Activated CD4-positive, alpha-beta memory T cell treated with anti-CD3 and anti-CD28 coated beads for 36 hours (primary cell): ENCODE measurements at regions of chr17 and their contacts with region 1.

Region 1: GRCh38 chr17:27236717-27237315 is 57.1 kb upstream of the WSB1 start:
- DNase-seq: peak; percentile 82
- H3K4me3 Mint-ChIP-seq: no peak overlapping the region
- H3K27ac Mint-ChIP-seq: no peak overlapping the region
- H3K4me1 Mint-ChIP-seq: peaks cover 15% of the 10 kb centered on the region
- H3K27me3 Mint-ChIP-seq: peaks cover 4% of the 10 kb centered on the region

Region 2: DNA sequence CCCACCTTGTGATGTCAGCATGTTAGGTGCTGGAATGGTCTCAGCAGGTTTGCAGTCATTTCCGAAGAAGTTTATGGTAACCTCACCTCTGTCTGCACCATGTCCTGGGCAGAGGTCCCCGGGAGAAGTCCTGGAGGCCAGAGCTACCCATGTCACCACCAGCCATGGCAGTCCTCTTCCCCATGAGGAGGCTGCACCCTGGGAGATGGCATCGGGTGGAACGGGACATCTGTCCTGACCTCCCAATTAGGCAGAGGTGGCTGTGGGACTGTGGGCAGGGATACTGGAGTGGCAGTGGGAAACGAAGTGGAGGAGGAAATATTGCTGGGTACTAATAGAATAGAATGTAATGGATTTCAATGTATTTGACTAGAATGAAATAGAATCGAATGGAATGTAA is 454.7 kb before region 1 on chr17:
- CTCF ChIA-PET with region 1: no interaction called
- POLR2A ChIA-PET with region 1: no interaction called
- intact Hi-C with region 1: no loop called
- DNase-seq: no peak
- H3K4me3 Mint-ChIP-seq: no peak overlapping the region
- H3K27ac Mint-ChIP-seq: no peak overlapping the region
- H3K4me1 Mint-ChIP-seq: no peaks in the 10 kb centered on the region
- H3K27me3 Mint-ChIP-seq: no peaks in the 10 kb centered on the region

Region 3: DNA sequence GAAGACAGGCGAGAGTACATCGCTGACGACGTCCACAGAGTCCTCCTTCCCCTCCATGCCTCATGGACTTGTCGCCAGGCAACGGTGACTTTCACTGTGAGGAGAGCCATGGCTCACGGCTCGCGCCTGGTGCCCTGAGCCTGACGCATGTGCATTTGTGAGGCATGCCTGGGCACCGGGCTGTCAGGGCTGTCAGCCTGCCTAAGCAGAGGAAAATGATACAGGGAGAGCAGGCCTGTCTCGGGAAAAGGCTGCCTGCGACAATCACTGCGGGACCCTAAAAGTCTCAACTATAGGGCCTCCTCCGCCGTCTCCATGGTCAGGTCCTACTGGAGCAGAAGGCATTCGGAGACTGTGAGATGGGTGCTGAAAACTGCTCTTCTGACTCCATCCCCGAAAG is 78.4 kb before region 1 on chr17:
- CTCF ChIA-PET with region 1: no interaction called
- POLR2A ChIA-PET with region 1: no interaction called
- intact Hi-C with region 1: no loop called
- DNase-seq: no peak
- H3K4me3 Mint-ChIP-seq: no peak overlapping the region
- H3K27ac Mint-ChIP-seq: no peak overlapping the region
- H3K4me1 Mint-ChIP-seq: no peaks in the 10 kb centered on the region
- H3K27me3 Mint-ChIP-seq: no peaks in the 10 kb centered on the region

Region 4: GRCh38 chr17:27293898-27294688 is 57.3 kb after region 1 on chr17 and contains the start of gene WSB1:
- CTCF ChIA-PET with region 1: interaction called, 47 read pairs
- POLR2A ChIA-PET with region 1: interaction called, 12 read pairs
- intact Hi-C with region 1: loop called (anchors 1 kb)
- DNase-seq: peak; percentile 94
- H3K4me3 Mint-ChIP-seq: peak within 1 kb of the TSS; percentile 99
- H3K27ac Mint-ChIP-seq: peak within 1 kb of the TSS; percentile 100
- H3K4me1 Mint-ChIP-seq: peaks cover 39% of the 10 kb centered on the region
- H3K27me3 Mint-ChIP-seq: no peaks in the 10 kb centered on the region
- total RNA-seq, gene WSB1: 135 to 147 TPM

Region 5: DNA sequence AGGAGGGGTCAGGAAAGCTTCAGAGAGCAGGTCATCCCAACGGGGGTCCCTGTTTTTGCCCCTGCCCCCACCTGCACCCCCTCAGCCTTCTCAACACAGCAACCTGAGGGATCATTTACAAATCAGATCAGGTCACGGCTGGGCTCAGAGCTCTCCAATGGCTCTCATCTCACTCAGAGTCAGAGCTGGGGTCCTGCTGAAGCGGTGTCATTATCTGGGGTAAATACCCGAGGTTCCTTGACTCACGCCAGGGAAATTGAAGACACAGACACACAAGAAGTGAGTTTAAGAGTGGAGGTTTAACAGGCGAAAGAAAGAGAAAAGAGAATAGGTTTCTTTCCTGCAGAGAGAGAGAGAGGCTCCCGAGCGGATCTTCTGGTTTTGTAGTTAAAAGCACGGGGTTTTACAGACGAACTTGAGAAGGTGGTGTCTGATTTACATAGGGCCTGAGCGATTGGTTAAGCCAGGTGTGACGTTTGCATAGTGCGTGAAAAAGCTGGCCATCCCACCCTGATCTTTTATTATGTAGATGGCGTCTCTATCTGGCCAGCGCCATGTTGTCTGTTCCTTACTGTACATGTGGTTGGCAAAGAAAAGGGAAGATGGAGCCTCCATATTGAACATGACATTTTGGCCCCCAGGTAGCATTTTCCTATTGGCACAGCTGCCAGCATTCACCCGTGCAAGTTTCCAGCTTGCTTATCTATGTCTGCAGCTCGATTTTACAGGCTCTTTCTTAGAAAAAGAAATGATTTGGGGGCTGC is 108.5 kb after region 1 on chr17:
- CTCF ChIA-PET with region 1: interaction called, 28 read pairs
- POLR2A ChIA-PET with region 1: no interaction called
- intact Hi-C with region 1: no loop called
- DNase-seq: no peak
- H3K4me3 Mint-ChIP-seq: no peak overlapping the region
- H3K27ac Mint-ChIP-seq: no peak overlapping the region
- H3K4me1 Mint-ChIP-seq: peaks cover 8% of the 10 kb centered on the region
- H3K27me3 Mint-ChIP-seq: peaks cover 3% of the 10 kb centered on the region

Region 6: GRCh38 chr17:27381007-27381501 is 144.2 kb after region 1 on chr17:
- CTCF ChIA-PET with region 1: interaction called, 55 read pairs
- POLR2A ChIA-PET with region 1: no interaction called
- intact Hi-C with region 1: no loop called
- DNase-seq: peak; percentile 90
- H3K4me3 Mint-ChIP-seq: no peak overlapping the region
- H3K27ac Mint-ChIP-seq: no peak overlapping the region
- H3K4me1 Mint-ChIP-seq: peaks cover 3% of the 10 kb centered on the region
- H3K27me3 Mint-ChIP-seq: peaks cover 11% of the 10 kb centered on the region